Heart right ventricle (tissue), 16 donors: ENCODE measurements at regions of chr1 and their contacts with region 1.

Region 1: DNA sequence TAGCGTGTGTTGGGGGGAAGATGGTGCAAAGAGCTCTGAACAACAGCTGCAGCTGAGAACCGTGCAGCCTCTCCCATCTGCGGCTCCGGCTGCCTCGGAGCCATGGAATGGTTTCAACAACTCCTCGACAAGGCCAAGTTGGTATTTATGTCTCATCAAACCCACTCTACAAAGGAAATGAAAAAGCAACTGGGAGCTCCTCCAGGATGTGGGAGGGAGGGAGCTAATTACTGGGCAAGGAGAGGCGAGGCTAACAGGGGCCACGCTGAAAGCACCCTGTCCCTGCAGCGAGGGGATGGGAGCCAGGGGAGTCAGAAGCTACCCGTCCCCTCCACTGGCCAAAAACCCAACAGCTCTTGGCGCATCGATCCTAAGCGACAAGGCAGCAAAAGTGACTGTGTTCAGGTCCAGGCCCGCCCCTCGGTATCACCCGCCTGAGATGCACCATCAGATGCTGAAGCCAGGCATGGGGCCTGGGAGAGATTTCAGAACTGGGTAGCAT is 63.1 kb downstream of the ACOT7 start:
- DNase-seq: no peak
- ATAC-seq: peak in 7 of 8 donors; percentile 32 to 70 (median 47)
- H3K4me3 ChIP-seq: no peak overlapping the region
- H3K27ac ChIP-seq: peak overlapping the region in 2 of 10 donors; percentile 9 to 39
- H3K4me1 ChIP-seq: peaks cover 0 to 25% (median 8%) of the 10 kb centered on the region in 9 donors
- H3K27me3 ChIP-seq: no peaks in the 10 kb centered on the region
- CTCF ChIP-seq: no peak

Region 2: DNA sequence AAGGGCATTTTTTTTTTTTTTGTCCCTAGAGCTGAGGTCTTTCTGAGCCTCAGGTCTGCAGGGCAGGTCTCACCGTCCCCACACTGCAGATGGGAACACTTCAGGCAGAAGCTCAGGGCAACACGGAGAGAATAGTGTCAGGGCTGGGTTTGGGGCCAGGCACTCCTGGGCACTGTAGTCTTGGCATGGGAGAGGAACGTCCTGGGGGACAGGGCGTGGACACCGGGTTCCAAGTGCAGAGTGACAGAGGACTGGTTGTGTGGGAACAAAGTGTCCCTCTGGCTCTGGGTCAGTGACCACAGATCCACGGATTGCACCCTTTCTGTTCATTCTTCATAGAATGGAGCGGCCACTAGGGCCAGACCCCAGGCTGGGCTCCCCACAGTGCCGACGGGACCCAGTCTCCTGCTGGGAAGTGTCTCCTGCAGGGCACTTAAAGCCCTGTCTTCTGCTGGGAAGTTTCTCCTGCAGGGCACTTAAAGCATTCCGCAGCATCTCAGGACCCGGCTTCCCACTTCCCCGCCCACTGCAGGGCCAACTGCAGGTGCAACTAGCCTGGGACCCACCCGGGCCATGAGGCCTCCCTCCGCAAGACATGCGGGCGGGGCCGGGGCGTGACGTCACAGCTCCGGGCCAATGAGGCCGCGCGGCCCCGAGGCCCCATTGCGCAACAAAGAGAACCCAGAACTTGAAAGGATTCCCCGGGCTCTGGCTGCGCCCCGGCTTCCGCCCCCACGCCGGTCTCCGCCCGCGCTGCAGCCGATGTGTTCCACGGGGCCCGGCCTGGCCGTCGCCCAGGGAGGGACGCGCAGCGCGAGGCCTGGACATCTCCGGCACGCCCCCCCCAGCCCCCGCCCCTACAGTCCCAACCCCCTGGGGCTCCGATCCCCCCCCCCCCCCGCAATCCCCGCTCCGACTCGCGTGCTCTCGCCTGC is 70.7 kb before region 1 on chr1:
- intact Hi-C with region 1: loop called in 1 of 10 experiments (anchors 5 kb)
- DNase-seq: peak; percentile 74 to 85
- ATAC-seq: peak; percentile 53 to 68 (median 61)
- H3K4me3 ChIP-seq: peak overlapping the region; percentile 30 to 78 (median 66)
- H3K27ac ChIP-seq: peak overlapping the region in 7 of 10 donors; percentile 65 to 78 (median 73)
- H3K4me1 ChIP-seq: peaks cover 14 to 45% (median 36%) of the 10 kb centered on the region in 9 donors
- H3K27me3 ChIP-seq: peaks cover 0 to 44% (median 32%) of the 10 kb centered on the region in 7 donors
- CTCF ChIP-seq: no peak